ENCODE measurements at regions of chr15 and their contacts with region 1.

Region 1: GRCh38 chr15:94230956-94231722 is at the start of gene MCTP2:
- DNase-seq: peak; percentile 83
- ATAC-seq: peak; percentile 89
- H3K4me3 Mint-ChIP-seq: peak within 1 kb of the TSS; percentile 79
- H3K27ac Mint-ChIP-seq: peak within 1 kb of the TSS; percentile 39
- H3K4me1 Mint-ChIP-seq: peaks cover 50% of the 10 kb centered on the region
- H3K27me3 Mint-ChIP-seq: peaks cover 22% of the 10 kb centered on the region
- CTCF ChIP-seq: no peak
- total RNA-seq, gene MCTP2: 7.3 to 7.4 TPM (median 7.4 TPM) in 3 replicates

Region 2: GRCh38 chr15:94163999-94164807 is 66.9 kb before region 1 on chr15:
- CTCF ChIA-PET with region 1: interaction called, 14 read pairs
- POLR2A ChIA-PET with region 1: no interaction called
- DNase-seq: peak; percentile 67
- ATAC-seq: peak; percentile 85
- H3K4me3 Mint-ChIP-seq: no peak overlapping the region
- H3K27ac Mint-ChIP-seq: no peak overlapping the region
- H3K4me1 Mint-ChIP-seq: no peaks in the 10 kb centered on the region
- H3K27me3 Mint-ChIP-seq: no peaks in the 10 kb centered on the region
- CTCF ChIP-seq: peak; percentile 89

Measured in WTC11 (cell line).